ENCODE measurements at regions of chr2 and their contacts with region 1.

Region 1: GRCh38 chr2:230602562-230603230 is 109.9 kb upstream of the CAB39 start:
- DNase-seq: peak; percentile 13 to 82 (median 63)
- ATAC-seq: peak; percentile 91
- H3K4me3 ChIP-seq: peak overlapping the region; percentile 19 to 30
- H3K4me3 Mint-ChIP-seq: peak overlapping the region; percentile 68
- H3K27ac ChIP-seq: peak overlapping the region; percentile 59 to 88
- H3K27ac Mint-ChIP-seq: peak overlapping the region; percentile 99
- H3K4me1 ChIP-seq: peaks cover 42% of the 10 kb centered on the region
- H3K4me1 Mint-ChIP-seq: peaks cover 68% of the 10 kb centered on the region
- H3K27me3 ChIP-seq: no peaks in the 10 kb centered on the region
- H3K27me3 Mint-ChIP-seq: no peaks in the 10 kb centered on the region
- CTCF ChIP-seq: no peak

Region 2: DNA sequence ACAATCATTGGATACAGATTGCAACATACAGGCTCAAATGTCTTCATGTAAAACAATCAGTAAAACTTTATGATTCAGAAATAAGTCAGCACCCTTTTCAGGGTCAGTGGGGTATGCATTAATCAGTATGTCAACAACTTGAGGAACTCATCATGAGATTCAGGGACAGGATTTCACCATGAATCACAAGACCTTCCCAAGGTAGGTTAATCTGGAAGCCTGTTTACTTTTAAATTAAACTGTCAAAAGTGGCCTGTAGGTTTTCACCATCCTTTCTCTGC is 81.9 kb before region 1 on chr2:
- CTCF ChIA-PET with region 1: no interaction called
- POLR2A ChIA-PET with region 1: no interaction called
- intact Hi-C with region 1: loop called in 1 of 2 experiments (anchors 5 kb)
- DNase-seq: no peak
- ATAC-seq: no peak
- H3K4me3 ChIP-seq: no peak overlapping the region
- H3K4me3 Mint-ChIP-seq: no peak overlapping the region
- H3K27ac ChIP-seq: no peak overlapping the region
- H3K27ac Mint-ChIP-seq: no peak overlapping the region
- H3K4me1 ChIP-seq: peaks cover 5% of the 10 kb centered on the region
- H3K4me1 Mint-ChIP-seq: peaks cover 8% of the 10 kb centered on the region
- H3K27me3 ChIP-seq: no peaks in the 10 kb centered on the region
- H3K27me3 Mint-ChIP-seq: no peaks in the 10 kb centered on the region
- CTCF ChIP-seq: no peak

Region 3: DNA sequence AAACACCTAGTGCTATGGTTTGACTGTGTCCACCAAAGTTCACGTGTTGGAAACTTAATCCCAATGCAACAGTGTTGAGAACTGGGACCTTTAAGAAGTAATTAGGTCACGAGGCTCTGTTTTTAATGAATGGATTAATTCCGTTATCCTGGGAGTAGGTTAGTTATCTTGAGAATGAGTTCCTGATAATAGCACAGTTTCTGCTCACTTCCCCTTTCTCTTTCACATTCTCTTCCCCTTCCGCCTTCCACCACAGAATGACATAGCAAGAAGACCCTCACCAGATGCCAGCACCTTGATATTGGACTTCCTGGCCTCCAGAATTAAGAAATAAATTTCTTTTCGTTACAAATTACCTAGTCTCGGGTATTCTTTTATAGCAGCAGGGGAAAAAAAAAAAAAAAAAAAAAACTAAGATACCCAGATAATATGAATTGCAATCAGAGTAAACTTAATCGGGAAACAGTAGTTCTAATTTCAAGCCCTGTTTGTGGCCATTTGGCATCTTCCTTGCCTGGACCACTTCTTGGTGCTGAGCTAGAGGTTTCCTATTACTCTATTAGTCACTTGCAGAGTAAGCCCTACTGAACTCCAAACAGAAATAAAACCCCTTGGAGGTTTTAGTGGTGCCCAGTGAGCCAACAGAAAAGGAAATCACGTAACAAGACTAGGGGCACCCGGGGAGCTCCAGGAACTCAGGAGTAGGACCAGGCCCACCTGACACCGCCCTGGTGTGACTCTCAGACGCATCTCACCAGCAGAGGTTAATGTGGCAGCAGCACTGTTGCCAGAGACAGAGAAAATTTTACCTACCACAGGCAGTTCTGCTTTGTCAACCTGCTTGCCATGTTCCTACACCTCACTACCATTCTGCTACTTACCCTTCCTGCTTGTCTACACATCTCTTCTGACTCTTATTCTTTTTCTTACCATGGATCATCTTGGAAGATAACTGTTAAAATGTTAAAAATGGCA is 37.6 kb before region 1 on chr2:
- CTCF ChIA-PET with region 1: no interaction called
- POLR2A ChIA-PET with region 1: no interaction called
- intact Hi-C with region 1: no loop called
- DNase-seq: peak in 1 of 9 experiments; percentile 16
- ATAC-seq: no peak
- H3K4me3 ChIP-seq: no peak overlapping the region
- H3K4me3 Mint-ChIP-seq: no peak overlapping the region
- H3K27ac ChIP-seq: no peak overlapping the region
- H3K27ac Mint-ChIP-seq: no peak overlapping the region
- H3K4me1 ChIP-seq: no peaks in the 10 kb centered on the region
- H3K4me1 Mint-ChIP-seq: peaks cover 14% of the 10 kb centered on the region
- H3K27me3 ChIP-seq: no peaks in the 10 kb centered on the region
- H3K27me3 Mint-ChIP-seq: no peaks in the 10 kb centered on the region
- CTCF ChIP-seq: no peak

Region 4: DNA sequence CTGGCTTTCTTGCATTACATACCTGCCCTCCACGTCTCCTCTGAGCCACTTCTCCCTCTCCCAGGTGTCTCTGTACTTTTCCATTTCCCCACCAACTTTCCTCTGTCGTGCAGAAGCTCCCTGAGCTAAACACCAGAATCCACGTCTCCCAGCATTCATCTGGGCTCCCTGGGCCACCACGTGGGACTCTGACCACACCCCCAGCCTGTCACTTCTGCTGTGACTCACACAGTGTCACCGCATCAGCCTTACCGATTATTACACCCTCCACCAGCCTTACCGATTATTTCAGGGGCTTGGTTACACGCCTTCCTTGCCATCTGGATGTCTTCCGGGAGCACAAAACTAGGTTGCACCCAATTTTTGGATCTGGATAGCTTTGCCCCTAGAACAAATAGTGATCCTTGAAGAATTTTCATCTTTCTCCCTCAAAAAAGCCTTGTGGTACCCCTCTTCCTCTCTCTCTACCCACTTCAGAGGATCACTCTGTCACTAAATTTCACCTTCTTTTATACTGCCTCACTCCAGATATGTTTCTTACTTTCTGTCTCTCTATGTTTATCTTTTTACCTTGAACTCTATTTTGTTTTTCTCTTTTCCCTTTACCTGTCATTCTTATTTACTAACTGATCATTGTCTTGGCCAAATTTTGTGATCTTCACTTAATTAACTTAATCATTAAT is 26.9 kb before region 1 on chr2:
- CTCF ChIA-PET with region 1: no interaction called
- POLR2A ChIA-PET with region 1: no interaction called
- intact Hi-C with region 1: loop called in 1 of 2 experiments (anchors 2 kb)
- DNase-seq: peak; percentile 18 to 85 (median 69)
- ATAC-seq: peak; percentile 98
- H3K4me3 ChIP-seq: peak overlapping the region; percentile 2 to 25
- H3K4me3 Mint-ChIP-seq: peak overlapping the region; percentile 67
- H3K27ac ChIP-seq: peak overlapping the region; percentile 2 to 73
- H3K27ac Mint-ChIP-seq: peak overlapping the region; percentile 80
- H3K4me1 ChIP-seq: peaks cover 34% of the 10 kb centered on the region
- H3K4me1 Mint-ChIP-seq: peaks cover 10% of the 10 kb centered on the region
- H3K27me3 ChIP-seq: no peaks in the 10 kb centered on the region
- H3K27me3 Mint-ChIP-seq: no peaks in the 10 kb centered on the region
- CTCF ChIP-seq: no peak

Region 5: DNA sequence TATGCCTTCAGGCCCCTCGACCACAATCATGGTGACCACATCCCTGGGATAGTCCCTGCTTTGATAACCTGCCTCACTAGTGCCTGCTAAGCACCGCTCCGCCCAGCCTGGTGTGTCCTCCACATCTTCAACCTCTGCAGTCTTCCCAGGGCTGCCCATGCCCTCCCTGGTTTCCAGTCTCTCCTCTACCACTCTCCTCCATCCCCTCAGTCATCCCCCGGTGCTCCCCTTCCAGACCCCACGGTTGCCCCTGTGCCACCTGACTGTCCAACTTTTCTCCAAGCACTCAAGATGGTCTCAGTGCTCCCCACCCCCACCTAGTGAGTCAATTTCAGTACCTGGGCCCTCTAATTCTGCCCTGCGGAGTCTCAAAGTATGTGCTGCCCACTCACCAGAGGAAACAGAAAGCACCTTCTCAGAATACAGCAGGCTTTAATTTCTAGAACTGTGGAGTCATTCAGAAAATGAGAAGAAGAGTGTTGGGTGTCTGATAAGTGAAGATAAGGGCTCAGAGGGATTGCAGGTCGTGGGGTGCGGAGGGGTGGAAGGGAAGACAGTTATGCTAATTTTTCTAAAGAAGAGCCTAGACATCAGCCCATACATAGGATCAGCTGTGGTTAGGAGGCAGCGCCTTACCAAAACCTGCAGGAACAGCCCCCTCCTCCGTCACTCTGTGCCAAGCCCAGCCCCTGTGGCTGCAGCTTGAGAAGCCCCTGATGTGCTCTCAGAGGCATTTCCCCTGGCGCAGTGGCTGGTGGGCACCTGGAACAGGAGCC is 56.4 kb after region 1 on chr2:
- CTCF ChIA-PET with region 1: no interaction called
- POLR2A ChIA-PET with region 1: interaction called, 10 read pairs
- intact Hi-C with region 1: no loop called
- DNase-seq: peak in 5 of 9 experiments; percentile 20 to 66 (median 47)
- ATAC-seq: peak; percentile 47
- H3K4me3 ChIP-seq: peak overlapping the region in 1 of 2 experiments; percentile 23
- H3K4me3 Mint-ChIP-seq: peak overlapping the region; percentile 56
- H3K27ac ChIP-seq: peak overlapping the region in 1 of 2 experiments; percentile 55
- H3K27ac Mint-ChIP-seq: peak overlapping the region; percentile 91
- H3K4me1 ChIP-seq: peaks cover 78% of the 10 kb centered on the region
- H3K4me1 Mint-ChIP-seq: peaks cover 84% of the 10 kb centered on the region
- H3K27me3 ChIP-seq: no peaks in the 10 kb centered on the region
- H3K27me3 Mint-ChIP-seq: no peaks in the 10 kb centered on the region
- CTCF ChIP-seq: no peak